ENCODE measurements at regions of chr6 and their contacts with region 1.

Region 1: DNA sequence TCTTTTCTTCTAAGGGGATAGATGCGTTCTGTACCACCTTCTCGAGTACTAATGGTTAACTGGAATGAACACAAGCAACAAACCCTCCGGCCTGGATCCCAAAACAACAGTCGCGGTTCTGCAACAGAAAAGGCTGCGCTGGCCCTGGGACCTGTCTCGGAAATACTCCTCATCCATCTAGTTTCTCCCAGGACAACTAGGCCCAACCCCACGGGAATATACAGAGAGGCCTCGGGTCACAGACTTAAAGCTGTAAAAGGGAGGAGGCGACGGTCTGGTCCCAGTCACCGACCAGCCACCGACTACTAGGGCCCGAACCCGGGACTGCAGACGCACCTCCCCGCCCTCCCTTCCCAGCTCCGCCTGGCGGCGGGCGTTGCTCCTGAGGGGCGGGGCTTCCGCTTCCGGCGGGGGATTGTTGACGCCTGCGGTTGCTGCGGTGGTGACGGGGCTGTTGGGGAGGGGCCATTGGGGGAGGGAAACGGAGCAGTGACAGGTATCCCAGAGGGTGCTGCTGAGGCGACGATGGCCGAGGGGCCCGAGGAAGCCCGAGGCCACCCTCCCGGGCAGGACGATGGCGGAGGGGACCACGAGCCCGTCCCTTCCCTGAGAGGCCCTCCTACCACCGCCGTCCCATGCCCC is at the start of gene FAM8A1:
- DNase-seq: peak; percentile 95
- H3K4me3 ChIP-seq: peak within 1 kb of the TSS; percentile 80 to 96
- H3K27ac ChIP-seq: peak within 1 kb of the TSS; percentile 93 to 98
- H3K4me1 ChIP-seq: no peaks in the 10 kb centered on the region
- H3K27me3 ChIP-seq: no peaks in the 10 kb centered on the region
- CTCF ChIP-seq: peak; percentile 51 to 96 (median 75)
- POLR2A ChIP-seq: peak; percentile 80
- total RNA-seq, gene FAM8A1: 23.7 to 39.4 TPM

Region 2: GRCh38 chr6:17439243-17439993 is 160.6 kb before region 1 on chr6:
- intact Hi-C with region 1: no loop called
- DNase-seq: no peak
- H3K4me3 ChIP-seq: no peak overlapping the region
- H3K27ac ChIP-seq: no peak overlapping the region
- H3K4me1 ChIP-seq: no peaks in the 10 kb centered on the region
- H3K27me3 ChIP-seq: no peaks in the 10 kb centered on the region
- CTCF ChIP-seq: no peak
- POLR2A ChIP-seq: no peak

Region 3: DNA sequence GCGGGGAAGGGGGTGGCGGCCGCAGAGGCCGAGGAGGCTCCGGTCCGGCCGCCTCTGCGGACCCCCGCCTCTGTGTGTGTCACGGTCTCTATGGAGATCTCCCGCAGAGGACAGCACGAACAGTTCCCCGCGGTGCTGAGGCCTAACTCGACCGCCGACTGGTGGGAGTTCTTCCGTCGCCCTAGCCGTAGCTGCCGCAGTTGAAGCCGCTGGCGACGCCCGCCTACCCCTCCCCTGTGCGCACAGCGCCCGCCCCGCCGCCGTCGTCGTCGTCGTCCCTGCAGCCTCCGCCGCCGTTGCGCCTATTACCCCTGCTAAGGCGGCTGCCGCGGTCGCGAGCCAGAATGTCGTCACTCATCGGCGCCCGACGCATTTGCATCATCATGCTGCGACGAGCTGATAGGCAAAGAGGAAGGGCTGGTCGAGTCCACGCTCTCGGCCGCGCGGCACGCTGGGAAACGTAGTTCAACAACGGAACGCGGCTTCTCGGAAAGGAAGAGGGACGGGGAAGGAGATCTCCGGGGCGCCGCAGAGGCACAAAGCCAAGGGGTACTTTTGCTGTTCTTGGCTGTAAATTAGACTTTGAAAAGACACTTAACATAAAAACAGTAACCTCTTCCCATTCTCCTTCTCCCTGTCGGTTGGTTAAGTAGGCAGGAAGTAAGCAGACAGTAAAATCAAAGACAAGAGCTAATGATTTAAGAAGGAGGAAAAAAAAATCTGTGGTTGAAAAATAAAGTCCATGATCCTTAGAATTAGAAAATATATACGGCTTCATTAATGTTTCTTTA is 106.8 kb after region 1 on chr6 and contains the start of gene NUP153:
- intact Hi-C with region 1: loop called (anchors 5 kb)
- DNase-seq: peak; percentile 97
- H3K4me3 ChIP-seq: peak within 1 kb of the TSS; percentile 57 to 82
- H3K27ac ChIP-seq: peak within 1 kb of the TSS; percentile 96 to 97
- H3K4me1 ChIP-seq: no peaks in the 10 kb centered on the region
- H3K27me3 ChIP-seq: no peaks in the 10 kb centered on the region
- CTCF ChIP-seq: peak in 2 of 4 experiments; percentile 33
- POLR2A ChIP-seq: peak; percentile 93
- total RNA-seq, gene NUP153: 35.3 to 46.2 TPM

Measured in prostate gland (tissue), 2 donors.